HepG2 (cell line): ENCODE measurements at regions of chr3 and their contacts with region 1.

Region 1: DNA sequence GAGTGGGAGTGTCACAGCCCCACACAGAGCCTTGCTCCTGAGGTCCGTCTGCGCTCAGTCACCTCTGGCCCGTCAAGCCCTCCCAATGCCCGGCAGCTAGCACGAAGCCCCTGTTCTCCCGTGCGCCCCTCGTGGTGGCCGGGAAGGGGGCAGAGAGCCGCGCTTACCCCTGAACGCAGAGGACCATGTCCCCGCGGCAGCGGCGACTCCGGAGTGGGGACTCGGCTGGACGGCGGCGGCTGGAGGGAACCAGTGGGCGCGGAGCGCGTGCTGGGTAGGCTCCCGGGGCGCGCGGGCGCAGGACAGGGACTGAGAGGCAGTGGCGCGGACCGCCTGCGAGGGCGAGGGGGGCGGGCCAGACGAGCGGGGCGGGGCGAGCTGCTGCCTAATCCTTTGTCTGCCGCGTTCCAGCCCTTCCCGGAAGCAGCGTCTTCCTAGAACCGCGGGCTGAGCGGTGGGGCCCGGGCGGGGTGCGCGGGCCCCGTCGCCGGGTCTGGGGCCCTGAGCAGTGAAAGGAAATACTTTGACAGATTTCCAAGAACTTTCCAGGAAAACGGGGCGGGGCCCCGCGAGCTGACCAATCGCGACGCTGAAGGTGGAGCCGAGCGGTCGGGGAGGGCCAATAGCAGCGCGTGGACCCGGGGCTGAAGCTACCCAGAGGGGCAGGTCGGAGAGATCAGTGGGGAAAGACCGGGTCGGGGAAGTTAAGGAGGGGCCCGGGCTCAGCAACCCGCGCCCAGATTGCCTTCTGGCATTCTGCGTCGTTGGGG is at the start of gene CISH:
- DNase-seq: peak; percentile 91
- ATAC-seq: peak; percentile 83
- H3K4me3 ChIP-seq: peak within 1 kb of the TSS; percentile 32 to 76 (median 55); a peak in 5 of 6 replicates
- H3K27ac ChIP-seq: peak within 1 kb of the TSS; percentile 19
- H3K4me1 ChIP-seq: peaks cover 44% of the 10 kb centered on the region
- H3K27me3 ChIP-seq: peaks cover 0 to 10% of the 10 kb centered on the region in 2 experiments; a peak in 1 of 5 replicates
- CTCF ChIP-seq: peak; percentile 66
- EP300 ChIP-seq: peak in 1 of 2 experiments; percentile 63; a peak in 2 of 4 replicates
- POLR2A ChIP-seq: no peak
- RAD21 ChIP-seq: peak; percentile 76
- total RNA-seq, gene CISH: 0.73 and 0.91 TPM in 2 replicates

Region 2: GRCh38 chr3:50298836-50299637 is 312.6 kb before region 1 on chr3 and contains the starts of genes HYAL3 and NAA80:
- CTCF ChIA-PET with region 1: no interaction called
- POLR2A ChIA-PET with region 1: no interaction called
- in situ Hi-C with region 1: no loop called
- intact Hi-C with region 1: no loop called
- DNase-seq: no peak
- ATAC-seq: peak; percentile 53
- H3K4me3 ChIP-seq: peak within 1 kb of the TSS; percentile 66 to 91 (median 89)
- H3K27ac ChIP-seq: peak within 1 kb of the TSS; percentile 87
- H3K4me1 ChIP-seq: peaks cover 52% of the 10 kb centered on the region
- H3K27me3 ChIP-seq: no peaks in the 10 kb centered on the region; a peak in 1 of 5 replicates
- CTCF ChIP-seq: peak; percentile 54
- EP300 ChIP-seq: no peak
- POLR2A ChIP-seq: peak in 1 of 2 experiments; percentile 79; a peak in 2 of 4 replicates
- RAD21 ChIP-seq: peak; percentile 67; the same call in 1 of the 2 replicates
- total RNA-seq, gene HYAL3: 5.5 and 5.9 TPM in 2 replicates
- total RNA-seq, gene NAA80: 1.5 and 3.4 TPM in 2 replicates

Region 3: GRCh38 chr3:50519471-50520089 is 92.1 kb before region 1 on chr3:
- CTCF ChIA-PET with region 1: interaction called, 4 read pairs
- POLR2A ChIA-PET with region 1: no interaction called
- in situ Hi-C with region 1: no loop called
- intact Hi-C with region 1: loop called (anchors 2 kb)
- DNase-seq: peak; percentile 41
- ATAC-seq: peak; percentile 70
- H3K4me3 ChIP-seq: no peak overlapping the region
- H3K27ac ChIP-seq: no peak overlapping the region
- H3K4me1 ChIP-seq: peaks cover 25% of the 10 kb centered on the region
- H3K27me3 ChIP-seq: peaks cover 3 to 27% of the 10 kb centered on the region in 2 experiments; a peak in 3 of 5 replicates
- CTCF ChIP-seq: peak; percentile 91
- EP300 ChIP-seq: no peak
- POLR2A ChIP-seq: no peak
- RAD21 ChIP-seq: peak; percentile 36; the same call in 1 of the 2 replicates

Region 4: GRCh38 chr3:50587806-50588758 is 23.6 kb before region 1 on chr3:
- CTCF ChIA-PET with region 1: interaction called, 3 read pairs
- POLR2A ChIA-PET with region 1: interaction called, 34 read pairs
- in situ Hi-C with region 1: no loop called
- intact Hi-C with region 1: loop called (anchors 1 kb)
- DNase-seq: peak; percentile 57
- ATAC-seq: peak; percentile 55
- H3K4me3 ChIP-seq: peak overlapping the region in 2 of 3 experiments; percentile 21 to 49; a peak in 3 of 6 replicates
- H3K27ac ChIP-seq: peak overlapping the region; percentile 99
- H3K4me1 ChIP-seq: peaks cover 100% of the 10 kb centered on the region
- H3K27me3 ChIP-seq: no peaks in the 10 kb centered on the region; a peak in 1 of 5 replicates
- CTCF ChIP-seq: no peak
- EP300 ChIP-seq: peak in 1 of 2 experiments; percentile 76; a peak in 3 of 4 replicates
- POLR2A ChIP-seq: peak; percentile 40 to 44; a peak in 2 of 4 replicates
- RAD21 ChIP-seq: peak; percentile 40; the same call in 1 of the 2 replicates

Region 5: DNA sequence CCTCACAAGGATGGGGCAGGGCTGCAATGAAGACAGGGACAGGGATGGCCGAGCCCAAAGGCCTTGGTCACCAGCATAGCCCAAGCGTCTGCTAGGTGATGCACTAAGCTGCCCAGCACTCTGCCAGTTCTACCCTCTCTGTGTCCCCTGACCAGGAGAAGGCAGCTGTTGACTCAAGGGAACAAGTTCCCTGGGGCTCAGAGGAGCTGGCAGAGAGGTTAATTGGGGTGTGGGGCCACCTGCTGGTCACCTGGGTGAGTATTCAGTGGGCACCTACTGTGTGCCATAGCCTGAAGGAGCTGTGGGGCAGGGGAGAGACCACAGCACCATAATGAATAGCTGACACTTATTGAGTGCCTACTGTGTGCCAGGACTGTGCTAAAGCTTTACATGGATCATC is 41.1 kb after region 1 on chr3:
- CTCF ChIA-PET with region 1: interaction called, 16 read pairs
- POLR2A ChIA-PET with region 1: interaction called, 12 read pairs
- in situ Hi-C with region 1: loop called (anchors 5 kb)
- intact Hi-C with region 1: loop called (anchors 1 kb)
- DNase-seq: peak; percentile 43
- ATAC-seq: peak; percentile 65
- H3K4me3 ChIP-seq: no peak overlapping the region
- H3K27ac ChIP-seq: no peak overlapping the region
- H3K4me1 ChIP-seq: no peaks in the 10 kb centered on the region
- H3K27me3 ChIP-seq: peaks cover 0 to 15% of the 10 kb centered on the region in 2 experiments; a peak in 3 of 5 replicates
- CTCF ChIP-seq: peak; percentile 80
- EP300 ChIP-seq: no peak
- POLR2A ChIP-seq: no peak
- RAD21 ChIP-seq: peak; percentile 65

Region 6: GRCh38 chr3:50786631-50787030 is 175.0 kb after region 1 on chr3:
- CTCF ChIA-PET with region 1: no interaction called
- POLR2A ChIA-PET with region 1: no interaction called
- in situ Hi-C with region 1: no loop called
- intact Hi-C with region 1: no loop called
- DNase-seq: no peak
- ATAC-seq: no peak
- H3K4me3 ChIP-seq: no peak overlapping the region
- H3K27ac ChIP-seq: no peak overlapping the region
- H3K4me1 ChIP-seq: no peaks in the 10 kb centered on the region
- H3K27me3 ChIP-seq: no peaks in the 10 kb centered on the region
- CTCF ChIP-seq: no peak
- EP300 ChIP-seq: no peak
- POLR2A ChIP-seq: no peak
- RAD21 ChIP-seq: no peak

Region 7: DNA sequence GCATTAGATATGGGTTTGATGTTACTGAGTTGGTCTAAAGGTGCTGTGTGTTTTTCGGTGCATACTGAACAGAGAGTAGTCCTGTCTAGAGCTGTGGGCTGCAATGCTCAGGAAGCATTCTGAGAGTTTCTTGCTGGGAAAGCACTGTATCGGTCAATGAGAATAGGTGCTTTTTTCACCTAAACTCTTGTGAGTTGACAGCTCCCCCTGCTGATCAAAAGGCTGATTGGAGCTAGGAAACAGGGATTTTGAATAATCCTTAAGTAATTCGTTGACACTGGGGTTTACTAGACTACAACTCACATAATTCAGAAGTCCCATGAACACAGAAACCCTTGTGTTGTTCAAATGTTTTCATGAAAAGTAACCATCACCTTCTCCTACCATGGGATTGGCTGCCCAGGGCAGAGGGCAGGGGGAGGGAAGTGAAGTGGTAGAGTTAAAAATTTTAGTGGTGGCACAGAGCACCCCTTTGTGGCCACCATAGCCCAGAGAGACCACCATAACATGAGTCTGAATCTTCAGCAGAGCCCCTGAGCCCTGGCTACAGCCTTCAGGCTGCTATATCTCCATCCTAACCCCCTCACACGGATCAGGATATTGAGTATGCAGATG is 760.4 kb after region 1 on chr3:
- CTCF ChIA-PET with region 1: interaction called, 11 read pairs
- POLR2A ChIA-PET with region 1: no interaction called
- in situ Hi-C with region 1: loop called (anchors 5 kb)
- intact Hi-C with region 1: loop called (anchors 1 kb)
- DNase-seq: peak; percentile 55
- ATAC-seq: peak; percentile 77
- H3K4me3 ChIP-seq: no peak overlapping the region
- H3K27ac ChIP-seq: no peak overlapping the region
- H3K4me1 ChIP-seq: no peaks in the 10 kb centered on the region
- H3K27me3 ChIP-seq: peaks cover 7 to 39% of the 10 kb centered on the region in 2 experiments; a peak in 4 of 5 replicates
- CTCF ChIP-seq: peak; percentile 79
- EP300 ChIP-seq: no peak
- POLR2A ChIP-seq: no peak
- RAD21 ChIP-seq: peak; percentile 78